ENCODE measurements at regions of chr4 and their contacts with region 1.

Region 1: DNA sequence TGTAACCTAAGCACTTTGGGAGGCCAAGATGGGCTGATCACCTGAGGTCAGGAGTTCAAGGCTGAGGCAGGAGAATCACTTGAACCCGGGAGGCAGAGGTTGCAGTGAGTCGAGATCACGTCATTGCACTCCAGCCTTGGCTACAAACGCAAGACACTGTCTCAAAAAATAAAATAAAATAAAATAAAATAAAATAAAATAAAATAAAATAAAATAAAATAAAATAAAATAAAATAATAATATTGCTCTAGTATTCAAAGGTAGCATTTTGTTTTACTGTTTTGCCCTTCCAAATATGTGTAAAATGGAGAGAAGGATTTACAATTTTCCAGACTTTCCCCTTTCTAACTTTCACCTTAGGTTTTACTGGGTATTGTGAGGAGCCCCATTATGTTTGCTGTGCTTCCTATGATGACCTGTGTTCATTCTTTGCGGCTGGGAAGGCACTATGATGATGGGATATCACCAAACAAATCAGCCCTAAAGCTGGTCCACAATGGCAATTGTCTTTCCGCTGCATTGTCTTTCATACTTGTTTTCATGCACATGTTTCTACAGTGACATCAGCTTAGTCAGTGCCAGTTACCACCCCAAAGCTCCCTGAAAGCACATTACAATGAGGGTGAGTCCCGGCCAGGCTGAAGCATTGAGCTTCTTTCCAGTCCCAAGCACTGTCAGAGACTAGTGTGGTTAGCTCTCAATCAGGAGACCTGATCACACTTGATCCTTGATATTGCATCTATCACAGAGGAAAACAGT is 50.8 kb downstream of the DTHD1 start:
- DNase-seq: no peak
- H3K4me3 Mint-ChIP-seq: no peak overlapping the region
- H3K27ac Mint-ChIP-seq: no peak overlapping the region
- H3K4me1 Mint-ChIP-seq: peaks cover 23% of the 10 kb centered on the region
- H3K27me3 Mint-ChIP-seq: no peaks in the 10 kb centered on the region

Region 2: GRCh38 chr4:36244257-36245079 is 87.7 kb before region 1 on chr4 and contains the start of gene ARAP2:
- CTCF ChIA-PET with region 1: interaction called, 4 read pairs
- POLR2A ChIA-PET with region 1: interaction called, 10 read pairs
- DNase-seq: peak; percentile 65
- H3K4me3 Mint-ChIP-seq: peak within 1 kb of the TSS; percentile 98
- H3K27ac Mint-ChIP-seq: peak within 1 kb of the TSS; percentile 95
- H3K4me1 Mint-ChIP-seq: peaks cover 39% of the 10 kb centered on the region
- H3K27me3 Mint-ChIP-seq: peaks cover 8% of the 10 kb centered on the region
- total RNA-seq, gene ARAP2: 35.8 to 49.7 TPM

Region 3: DNA sequence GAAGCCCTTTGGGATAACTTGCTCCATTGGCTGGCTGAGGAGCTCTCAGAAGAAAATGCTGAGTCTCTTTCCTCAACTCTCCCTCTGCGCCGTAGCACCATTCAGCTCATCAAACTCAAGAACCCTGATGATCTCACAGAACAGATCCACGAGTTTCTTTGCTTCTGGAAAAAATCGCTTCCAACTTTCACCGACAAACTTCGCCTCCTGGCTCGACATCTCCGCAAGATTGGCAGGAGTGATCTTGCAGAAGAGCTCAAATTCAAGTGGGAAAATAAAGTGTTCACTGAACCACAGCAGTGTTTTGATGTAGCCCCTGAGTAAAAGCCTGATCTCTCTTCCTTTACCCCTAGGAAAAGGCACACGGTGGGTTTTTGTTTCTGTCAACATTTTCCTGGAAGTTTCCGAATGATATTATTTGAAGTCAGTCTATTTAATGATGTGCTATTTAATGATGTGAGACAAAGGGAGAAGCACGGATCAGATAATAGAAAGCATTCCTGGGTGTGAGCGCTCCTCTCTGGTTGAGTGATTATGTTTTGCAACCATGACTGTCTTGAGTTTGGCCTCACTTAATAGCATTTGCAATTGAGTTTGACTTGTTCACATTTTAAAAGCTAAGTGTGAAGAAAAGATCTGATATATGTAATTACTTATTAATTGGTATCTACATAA is 11.4 kb after region 1 on chr4:
- CTCF ChIA-PET with region 1: interaction called, 13 read pairs
- POLR2A ChIA-PET with region 1: no interaction called
- DNase-seq: no peak
- H3K4me3 Mint-ChIP-seq: no peak overlapping the region
- H3K27ac Mint-ChIP-seq: no peak overlapping the region
- H3K4me1 Mint-ChIP-seq: peaks cover 5% of the 10 kb centered on the region
- H3K27me3 Mint-ChIP-seq: no peaks in the 10 kb centered on the region